ENCODE measurements at regions of chr9 and their contacts with region 1.

Region 1: DNA sequence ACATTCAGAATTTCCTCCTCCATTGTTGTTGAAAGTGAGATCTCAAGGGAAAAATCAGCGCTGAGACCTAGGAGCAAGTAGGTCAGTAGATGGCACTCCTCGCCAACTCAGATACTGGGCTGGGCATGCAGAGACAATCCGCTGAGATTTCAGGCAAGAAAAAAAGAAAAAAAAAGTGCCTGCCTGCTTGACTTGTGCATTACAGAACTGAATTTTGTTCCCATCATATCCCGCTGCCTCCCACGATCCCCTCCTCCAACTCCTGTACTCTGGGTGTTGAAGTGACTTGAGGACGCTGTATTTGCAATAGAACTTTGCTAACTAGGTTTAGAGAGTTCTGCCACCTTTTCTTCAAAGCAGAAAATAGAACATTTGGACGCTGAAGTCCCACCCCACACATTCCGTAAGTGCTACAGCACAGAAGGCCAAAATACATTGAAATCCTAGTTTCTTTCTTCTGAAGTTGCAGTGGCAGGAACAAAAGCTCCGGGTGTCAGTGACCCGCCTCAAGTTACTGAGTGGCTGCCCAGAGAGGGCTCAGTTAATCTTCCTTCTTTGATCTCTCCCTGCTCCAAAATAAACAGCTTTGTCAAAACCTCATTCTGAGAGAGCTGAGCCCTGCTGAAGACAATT is 265.8 kb downstream of the MLLT3 start:
- H3K4me3 ChIP-seq: peak overlapping the region; percentile 8; the same call in 1 of the 2 replicates
- H3K27ac ChIP-seq: peak overlapping the region; percentile 78
- H3K4me1 ChIP-seq: peaks cover 11% of the 10 kb centered on the region
- CTCF ChIP-seq: peak; percentile 84

Region 2: DNA sequence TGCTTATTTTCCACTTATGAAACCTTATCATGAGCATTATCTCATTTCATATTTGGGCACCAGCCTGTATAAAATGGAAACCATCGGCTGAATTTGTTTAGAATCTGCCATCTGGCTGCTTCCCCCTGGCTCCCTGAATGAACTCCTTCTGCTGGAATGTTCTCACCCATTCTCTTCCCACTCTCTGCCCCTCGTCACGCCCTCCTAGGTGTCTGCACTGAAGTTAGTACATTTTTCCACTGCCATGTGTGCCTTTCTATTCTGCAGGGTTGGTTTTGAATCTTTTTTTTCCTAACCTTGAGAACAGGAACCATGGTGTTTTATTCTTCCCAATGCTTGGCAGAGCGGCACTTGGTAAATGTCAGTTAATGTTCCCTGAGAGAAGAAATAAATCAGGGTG is 93.9 kb before region 1 on chr9:
- CTCF ChIA-PET with region 1: no interaction called
- POLR2A ChIA-PET with region 1: no interaction called
- H3K4me3 ChIP-seq: no peak overlapping the region
- H3K27ac ChIP-seq: no peak overlapping the region
- H3K4me1 ChIP-seq: no peaks in the 10 kb centered on the region
- CTCF ChIP-seq: no peak

Region 3: GRCh38 chr9:20499013-20499412 is 142.5 kb after region 1 on chr9:
- CTCF ChIA-PET with region 1: no interaction called
- POLR2A ChIA-PET with region 1: no interaction called
- H3K4me3 ChIP-seq: no peak overlapping the region
- H3K27ac ChIP-seq: no peak overlapping the region
- H3K4me1 ChIP-seq: peaks cover 24% of the 10 kb centered on the region
- CTCF ChIP-seq: no peak

Region 4: GRCh38 chr9:21110708-21111576 is 754.4 kb after region 1 on chr9:
- CTCF ChIA-PET with region 1: interaction called, 16 read pairs
- POLR2A ChIA-PET with region 1: no interaction called
- H3K4me3 ChIP-seq: no peak overlapping the region
- H3K27ac ChIP-seq: no peak overlapping the region
- H3K4me1 ChIP-seq: no peaks in the 10 kb centered on the region
- CTCF ChIP-seq: peak; percentile 65